ENCODE measurements at regions of chr4 and their contacts with region 1.

Region 1: DNA sequence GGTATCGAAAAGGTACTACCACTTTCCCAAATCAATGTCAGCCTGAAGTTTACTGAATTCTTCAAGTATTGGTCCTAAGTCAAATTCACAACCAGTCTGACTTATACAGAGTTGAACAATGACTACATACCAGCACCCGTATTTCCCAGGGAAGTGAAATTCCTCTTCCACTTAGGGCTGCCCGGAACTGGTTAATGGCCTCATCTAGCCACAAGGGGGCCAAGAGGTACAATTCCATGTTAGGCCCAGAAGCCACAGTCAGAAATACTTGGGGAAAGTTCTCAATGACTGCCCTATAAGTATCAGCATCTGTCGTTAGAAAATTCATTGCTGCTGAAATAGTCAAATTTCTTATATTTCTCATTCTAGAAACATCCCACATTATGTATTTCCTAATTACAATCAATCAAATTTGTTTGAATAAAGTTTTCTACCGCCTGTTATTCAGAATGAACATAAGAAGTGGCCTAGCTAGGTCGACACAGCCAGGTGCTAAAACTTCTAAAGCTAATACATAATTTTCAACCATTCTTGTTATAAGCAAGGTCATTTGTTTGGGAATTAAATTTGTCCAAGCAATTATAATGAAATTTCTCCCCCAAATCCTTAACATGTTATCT is 5.7 kb upstream of the PCDH7 start:
- DNase-seq: no peak
- H3K4me3 ChIP-seq: no peak overlapping the region
- H3K27ac ChIP-seq: no peak overlapping the region
- H3K4me1 ChIP-seq: peaks cover 11 to 24% (median 20%) of the 10 kb centered on the region in 4 donors
- H3K27me3 ChIP-seq: peaks cover 0 to 3% (median 0%) of the 10 kb centered on the region in 4 donors
- CTCF ChIP-seq: peak; percentile 63 to 83 (median 64)
- EP300 ChIP-seq: no peak
- POLR2A ChIP-seq: no peak

Region 2: GRCh38 chr4:31045724-31046318 is 331.3 kb after region 1 on chr4:
- intact Hi-C with region 1: loop called (anchors 10 kb)
- DNase-seq: no peak
- H3K4me3 ChIP-seq: no peak overlapping the region
- H3K27ac ChIP-seq: no peak overlapping the region
- H3K4me1 ChIP-seq: peaks cover 0 to 4% (median 1%) of the 10 kb centered on the region in 4 donors
- H3K27me3 ChIP-seq: no peaks in the 10 kb centered on the region
- CTCF ChIP-seq: peak; percentile 11 to 37 (median 28)
- EP300 ChIP-seq: no peak
- POLR2A ChIP-seq: no peak

Region 3: GRCh38 chr4:31104577-31104976 is 390.1 kb after region 1 on chr4:
- intact Hi-C with region 1: loop called (anchors 5 kb)
- DNase-seq: no peak
- H3K4me3 ChIP-seq: no peak overlapping the region
- H3K27ac ChIP-seq: no peak overlapping the region
- H3K4me1 ChIP-seq: peaks cover 7 to 45% (median 42%) of the 10 kb centered on the region in 4 donors
- H3K27me3 ChIP-seq: no peaks in the 10 kb centered on the region
- CTCF ChIP-seq: no peak
- EP300 ChIP-seq: no peak
- POLR2A ChIP-seq: no peak